ENCODE measurements at regions of chr2 and their contacts with region 1.

Region 1: DNA sequence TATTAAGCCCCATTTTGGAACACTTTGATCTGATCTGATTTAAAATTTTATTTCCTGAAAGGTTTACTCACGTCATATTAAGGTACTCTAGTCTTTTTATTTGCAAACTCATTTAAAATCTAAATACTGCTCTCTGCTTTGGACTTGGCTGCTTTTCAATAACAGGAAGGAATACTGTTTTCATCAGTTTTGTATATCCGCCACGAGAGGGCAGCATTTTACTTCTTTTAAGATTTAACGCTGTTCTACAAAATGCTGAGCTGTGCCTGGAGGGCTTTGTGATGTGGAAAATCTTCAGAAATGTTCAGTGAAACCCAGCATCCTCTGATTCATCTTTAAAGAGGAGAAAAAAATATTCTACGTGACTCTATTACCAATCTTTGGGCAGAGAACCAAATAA is 37.5 kb upstream of the SLC38A11 start:
- DNase-seq: peak; percentile 64
- H3K4me3 Mint-ChIP-seq: no peak overlapping the region
- H3K27ac Mint-ChIP-seq: no peak overlapping the region
- H3K4me1 Mint-ChIP-seq: peaks cover 11% of the 10 kb centered on the region
- H3K27me3 Mint-ChIP-seq: no peaks in the 10 kb centered on the region

Region 2: GRCh38 chr2:165203689-165204559 is 211.1 kb after region 1 on chr2 and contains the start of gene SCN3A:
- CTCF ChIA-PET with region 1: interaction called, 11 read pairs
- intact Hi-C with region 1: loop called (anchors 1 kb)
- DNase-seq: peak; percentile 18
- H3K4me3 Mint-ChIP-seq: peak within 1 kb of the TSS; percentile 11
- H3K27ac Mint-ChIP-seq: no peak within 1 kb of the TSS
- H3K4me1 Mint-ChIP-seq: peaks cover 3% of the 10 kb centered on the region
- H3K27me3 Mint-ChIP-seq: peaks cover 9% of the 10 kb centered on the region
- total RNA-seq, gene SCN3A: 0.10 to 0.12 TPM

Region 3: DNA sequence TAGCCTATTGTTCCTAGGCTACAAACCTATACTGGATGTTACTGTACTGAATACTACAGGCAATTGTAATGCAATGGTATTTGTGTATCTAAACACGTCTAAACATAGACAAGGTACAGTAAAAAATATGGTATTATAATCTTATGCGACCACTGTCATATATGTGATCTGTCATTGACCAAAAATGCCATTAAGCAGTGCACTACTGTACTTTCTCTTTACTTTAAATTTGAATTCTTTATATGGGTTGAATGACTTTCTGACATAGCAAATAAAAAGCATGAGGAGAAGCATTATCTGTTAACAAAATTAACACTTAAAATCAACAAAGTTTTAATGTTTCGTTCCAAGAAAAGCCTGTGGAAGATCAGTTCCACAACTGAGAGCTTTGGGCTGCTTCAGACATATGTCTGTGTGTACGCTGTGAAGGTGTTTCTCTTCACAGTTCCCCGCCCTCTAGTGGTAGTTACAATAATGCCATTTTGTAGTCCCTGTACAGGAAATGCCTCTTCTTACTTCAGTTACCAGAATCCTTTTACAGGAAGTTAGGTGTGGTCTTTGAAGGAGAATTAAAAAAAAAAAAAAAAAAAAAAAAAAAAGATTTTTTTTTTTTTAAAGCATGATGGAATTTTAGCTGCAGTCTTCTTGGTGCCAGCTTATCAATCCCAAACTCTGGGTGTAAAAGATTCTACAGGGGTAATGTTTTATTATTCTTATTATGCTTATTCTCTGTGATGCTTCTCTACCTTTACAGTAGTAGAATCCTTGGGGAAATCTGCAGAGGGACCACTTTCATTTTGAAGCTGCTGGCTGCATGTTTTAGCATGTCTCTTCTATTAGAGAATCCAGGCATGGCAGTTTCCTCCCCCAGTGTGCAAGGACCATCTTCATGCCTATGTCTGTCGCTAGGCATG is 300.9 kb after region 1 on chr2:
- CTCF ChIA-PET with region 1: no interaction called
- intact Hi-C with region 1: loop called (anchors 1 kb)
- DNase-seq: peak; percentile 52
- H3K4me3 Mint-ChIP-seq: no peak overlapping the region
- H3K27ac Mint-ChIP-seq: no peak overlapping the region
- H3K4me1 Mint-ChIP-seq: peaks cover 5% of the 10 kb centered on the region
- H3K27me3 Mint-ChIP-seq: peaks cover 10% of the 10 kb centered on the region

Region 4: DNA sequence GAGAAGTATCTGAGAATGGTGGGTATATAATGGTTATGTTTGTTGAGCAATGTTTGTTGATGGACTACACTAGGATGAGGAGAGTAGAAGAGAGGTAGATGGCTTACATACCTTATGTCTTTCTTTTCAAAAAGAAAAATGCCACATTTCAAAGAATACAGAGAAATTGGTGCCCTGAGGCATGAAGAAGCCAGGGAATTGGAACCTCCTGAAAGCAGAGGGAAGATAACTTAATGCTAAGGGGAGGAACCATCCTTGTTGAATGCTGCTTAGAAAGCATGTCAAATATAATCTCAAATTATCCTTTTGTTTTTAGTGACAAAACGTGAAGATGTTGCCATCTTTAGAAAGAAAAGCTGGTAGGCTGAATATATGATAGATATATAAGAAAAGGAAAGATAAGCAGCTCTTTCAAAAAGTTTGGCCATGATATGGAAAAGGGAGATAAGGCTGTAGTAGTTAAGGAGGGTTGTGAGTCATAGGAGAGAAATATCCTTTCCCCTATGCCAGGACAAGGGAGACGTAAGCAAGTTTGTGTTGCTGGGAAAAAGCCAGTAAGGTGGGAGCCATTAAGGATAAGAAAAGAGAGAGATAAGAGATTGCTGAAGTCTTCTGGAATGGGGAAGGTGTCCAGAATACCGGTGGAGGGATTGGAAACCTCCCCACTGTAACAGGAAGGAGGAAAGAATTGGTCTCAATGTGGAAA is 312.7 kb after region 1 on chr2:
- CTCF ChIA-PET with region 1: no interaction called
- intact Hi-C with region 1: loop called (anchors 1 kb)
- DNase-seq: no peak
- H3K4me3 Mint-ChIP-seq: no peak overlapping the region
- H3K27ac Mint-ChIP-seq: no peak overlapping the region
- H3K4me1 Mint-ChIP-seq: no peaks in the 10 kb centered on the region
- H3K27me3 Mint-ChIP-seq: no peaks in the 10 kb centered on the region

Region 5: GRCh38 chr2:165390875-165391274 is 398.1 kb after region 1 on chr2:
- CTCF ChIA-PET with region 1: no interaction called
- intact Hi-C with region 1: loop called (anchors 10 kb)
- DNase-seq: no peak
- H3K4me3 Mint-ChIP-seq: no peak overlapping the region
- H3K27ac Mint-ChIP-seq: no peak overlapping the region
- H3K4me1 Mint-ChIP-seq: peaks cover 3% of the 10 kb centered on the region
- H3K27me3 Mint-ChIP-seq: peaks cover 17% of the 10 kb centered on the region

Region 6: DNA sequence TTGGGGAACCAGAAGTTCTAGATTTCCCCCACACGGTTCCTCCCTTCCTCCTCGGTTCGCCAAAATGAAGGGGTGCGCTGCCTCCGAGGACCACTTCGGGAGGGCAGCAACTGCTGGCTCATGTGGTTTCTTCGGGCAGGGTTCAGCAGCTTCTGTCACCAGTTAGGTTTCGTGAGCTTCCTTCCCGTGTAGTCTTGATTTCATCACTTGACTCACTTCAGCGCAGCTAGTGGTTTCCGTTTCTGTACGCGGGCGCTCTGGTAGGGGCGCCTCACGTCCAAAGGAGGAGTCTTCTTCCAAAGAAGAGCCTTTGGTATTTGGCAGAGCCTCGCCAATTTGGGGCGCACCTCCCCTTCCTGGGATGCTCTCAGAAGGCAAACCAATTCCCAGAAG is 801.7 kb after region 1 on chr2:
- CTCF ChIA-PET with region 1: no interaction called
- intact Hi-C with region 1: loop called (anchors 10 kb)
- DNase-seq: peak; percentile 78
- H3K4me3 Mint-ChIP-seq: peak overlapping the region; percentile 82
- H3K27ac Mint-ChIP-seq: peak overlapping the region; percentile 78
- H3K4me1 Mint-ChIP-seq: peaks cover 15% of the 10 kb centered on the region
- H3K27me3 Mint-ChIP-seq: peaks cover 32% of the 10 kb centered on the region

Region 7: GRCh38 chr2:166127217-166128155 is 1134.7 kb after region 1 on chr2 and contains the start of gene SCN1A:
- CTCF ChIA-PET with region 1: no interaction called
- intact Hi-C with region 1: loop called (anchors 2 kb)
- DNase-seq: no peak
- H3K4me3 Mint-ChIP-seq: no peak within 1 kb of the TSS
- H3K27ac Mint-ChIP-seq: no peak within 1 kb of the TSS
- H3K4me1 Mint-ChIP-seq: peaks cover 2% of the 10 kb centered on the region
- H3K27me3 Mint-ChIP-seq: peaks cover 12% of the 10 kb centered on the region
- total RNA-seq, gene SCN1A: not detected

Measured in activated naive CD4-positive, alpha-beta T cell treated with anti-CD3 and anti-CD28 coated beads for 36 hours (primary cell).